ENCODE measurements at regions of chr2 and their contacts with region 1.

Region 1: GRCh38 chr2:10245656-10246055 is 57.0 kb upstream of the HPCAL1 start:
- DNase-seq: no peak
- H3K4me3 ChIP-seq: no peak overlapping the region
- H3K27ac ChIP-seq: no peak overlapping the region
- H3K4me1 ChIP-seq: no peaks in the 10 kb centered on the region
- H3K27me3 ChIP-seq: no peaks in the 10 kb centered on the region
- CTCF ChIP-seq: no peak

Region 2: DNA sequence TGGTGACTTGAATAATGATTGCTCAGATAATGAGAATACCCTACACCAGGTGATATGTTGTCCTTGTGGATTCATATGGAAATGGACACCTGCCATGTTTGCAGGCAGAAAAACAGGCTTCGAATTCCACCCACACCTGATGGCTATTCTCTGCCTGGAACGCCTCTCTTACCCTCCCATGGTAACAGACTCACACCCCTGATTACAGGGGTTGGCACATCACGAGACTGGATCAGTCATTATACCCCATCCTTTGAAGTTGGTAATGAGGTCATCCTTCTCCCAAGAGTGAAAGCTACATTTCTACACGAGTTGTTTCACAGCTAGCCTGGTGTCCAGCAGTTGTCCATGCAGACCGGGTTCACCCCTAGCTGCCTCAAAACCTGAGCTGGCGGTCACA is 1170.7 kb before region 1 on chr2:
- CTCF ChIA-PET with region 1: no interaction called
- dilution Hi-C with region 1: no loop called
- in situ Hi-C with region 1: no loop called
- intact Hi-C with region 1: no loop called
- DNase-seq: peak; percentile 42
- H3K4me3 ChIP-seq: no peak overlapping the region
- H3K27ac ChIP-seq: no peak overlapping the region
- H3K4me1 ChIP-seq: peaks cover 26% of the 10 kb centered on the region
- H3K27me3 ChIP-seq: no peaks in the 10 kb centered on the region
- CTCF ChIP-seq: no peak

Region 3: DNA sequence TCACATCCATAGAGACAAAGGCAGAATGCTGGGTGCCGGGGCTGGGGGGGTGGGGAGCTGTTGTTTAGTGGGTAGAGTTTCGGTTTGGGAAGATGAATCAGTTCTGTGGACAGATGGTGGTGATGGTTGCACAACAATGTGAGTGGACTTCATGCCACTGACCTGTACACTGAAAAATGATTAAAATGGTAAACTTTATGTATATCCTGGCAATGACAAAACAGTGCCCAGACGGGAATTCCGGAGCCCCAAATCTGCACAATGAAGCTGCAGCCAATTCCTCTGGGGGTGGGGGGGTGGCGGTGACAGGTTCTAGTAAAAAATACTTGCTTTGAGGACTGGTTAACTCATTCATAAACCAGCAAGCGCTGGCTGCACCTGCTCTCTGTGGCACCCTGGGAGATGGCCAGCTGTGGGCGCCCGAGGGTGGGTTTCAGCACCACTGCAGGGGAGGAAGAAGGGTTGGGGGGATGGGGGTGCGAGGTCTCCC is 24.7 kb before region 1 on chr2:
- CTCF ChIA-PET with region 1: no interaction called
- dilution Hi-C with region 1: no loop called
- in situ Hi-C with region 1: no loop called
- intact Hi-C with region 1: no loop called
- DNase-seq: peak; percentile 40
- H3K4me3 ChIP-seq: no peak overlapping the region
- H3K27ac ChIP-seq: no peak overlapping the region
- H3K4me1 ChIP-seq: no peaks in the 10 kb centered on the region
- H3K27me3 ChIP-seq: no peaks in the 10 kb centered on the region
- CTCF ChIP-seq: no peak

Region 4: DNA sequence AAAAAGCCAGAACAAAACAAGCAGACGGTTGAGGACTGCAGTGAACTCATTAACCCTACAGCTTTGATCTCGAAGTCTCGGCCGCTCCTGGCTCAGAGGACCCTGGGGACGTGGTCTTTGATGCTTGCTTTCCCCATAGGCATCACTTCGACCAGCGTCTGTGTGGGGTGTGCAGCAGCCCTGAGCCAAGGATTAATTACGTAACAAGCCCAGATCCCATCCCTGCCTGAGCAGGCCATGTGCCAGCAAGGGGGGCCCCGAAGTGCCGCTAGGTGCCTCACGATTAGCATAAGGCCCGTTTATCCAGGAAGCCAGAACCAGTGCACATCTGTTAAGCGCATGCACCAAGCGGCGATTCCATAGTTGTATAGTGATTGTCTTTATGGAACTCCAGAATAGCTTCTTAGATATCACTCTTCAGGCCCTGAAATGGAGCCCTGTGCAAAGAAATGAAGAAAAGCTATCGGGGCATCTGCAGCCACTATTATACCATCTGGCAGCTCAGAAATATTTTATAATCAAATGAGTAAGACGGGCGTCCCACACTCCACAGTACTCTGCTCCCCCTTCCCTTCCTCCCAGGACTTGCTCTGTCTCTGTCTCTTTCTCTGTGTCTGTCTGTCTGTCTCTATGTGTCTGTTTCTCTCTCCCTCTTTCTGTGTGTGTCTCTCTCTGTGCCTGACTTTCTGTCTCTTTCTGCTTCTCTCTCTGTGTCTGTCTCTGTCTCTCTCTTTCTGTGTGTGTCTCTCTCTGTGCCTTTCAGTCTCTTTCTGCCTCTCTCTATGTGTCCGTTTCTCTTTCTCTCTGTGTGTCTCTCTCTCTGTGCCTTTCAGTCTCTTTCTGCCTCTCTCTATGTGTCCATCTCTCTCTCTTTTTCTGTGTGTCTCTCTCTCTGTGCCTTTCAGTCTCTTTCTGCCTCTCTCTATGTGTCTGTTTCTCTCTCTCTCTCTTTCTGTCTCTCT is 98.7 kb after region 1 on chr2:
- CTCF ChIA-PET with region 1: no interaction called
- dilution Hi-C with region 1: loop called (anchors 5 kb)
- in situ Hi-C with region 1: no loop called
- intact Hi-C with region 1: no loop called
- DNase-seq: no peak
- H3K4me3 ChIP-seq: no peak overlapping the region
- H3K27ac ChIP-seq: no peak overlapping the region
- H3K4me1 ChIP-seq: peaks cover 13% of the 10 kb centered on the region
- H3K27me3 ChIP-seq: no peaks in the 10 kb centered on the region
- CTCF ChIP-seq: no peak

Measured in mammary epithelial cell (primary cell).